Endothelial cell of umbilical vein (primary cell): ENCODE measurements at regions of chr12 and their contacts with region 1.

Region 1: GRCh38 chr12:132687208-132688164 is at the starts of genes POLE and PXMP2:
- DNase-seq: peak; percentile 92
- H3K4me3 ChIP-seq: peak within 1 kb of the TSS; percentile 37 to 77 (median 62)
- H3K27ac ChIP-seq: peak within 1 kb of the TSS; percentile 62
- H3K4me1 ChIP-seq: no peaks in the 10 kb centered on the region
- H3K27me3 ChIP-seq: no peaks in the 10 kb centered on the region
- CTCF ChIP-seq: no peak
- POLR2A ChIP-seq: peak; percentile 70
- total RNA-seq, gene POLE: 73.7 and 82.7 TPM in 2 replicates
- total RNA-seq, gene PXMP2: 21.1 and 24.0 TPM in 2 replicates

Region 2: DNA sequence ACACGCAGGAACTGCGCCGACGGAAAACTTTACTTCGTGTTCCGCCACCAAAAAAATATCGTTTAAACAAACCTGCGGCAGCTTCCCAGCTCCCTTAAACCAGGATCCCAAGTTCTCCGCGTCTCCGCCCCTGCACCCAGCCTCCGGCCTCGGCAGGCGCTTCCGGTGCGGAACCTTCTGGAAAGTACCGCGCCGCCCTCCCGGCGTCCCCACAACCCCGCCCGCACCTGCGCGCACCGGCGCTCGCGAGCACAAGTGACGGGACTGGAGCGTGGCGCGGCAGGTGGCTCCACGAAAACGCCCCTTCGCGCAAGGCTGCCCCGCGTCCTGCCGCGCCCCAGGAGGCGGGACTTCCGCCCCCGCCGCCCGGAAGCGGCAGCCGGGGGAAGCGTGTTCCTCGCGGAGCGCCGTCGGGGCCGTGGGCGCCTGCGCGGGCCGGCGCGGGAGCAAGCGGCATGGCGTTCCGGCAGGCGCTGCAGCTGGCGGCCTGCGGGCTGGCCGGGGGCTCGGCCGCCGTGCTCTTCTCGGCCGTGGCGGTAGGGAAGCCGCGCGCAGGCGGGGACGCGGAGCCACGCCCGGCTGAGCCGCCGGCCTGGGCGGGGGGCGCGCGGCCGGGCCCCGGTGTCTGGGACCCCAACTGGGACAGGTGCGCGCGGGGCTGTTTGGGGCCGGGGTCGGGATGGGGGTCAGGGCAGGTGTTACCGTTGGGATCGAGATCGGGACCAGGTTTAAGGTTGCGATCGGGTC is 23.1 kb after region 1 on chr12 and contains the start of gene PGAM5:
- CTCF ChIA-PET with region 1: no interaction called
- POLR2A ChIA-PET with region 1: no interaction called
- dilution Hi-C with region 1: no loop called
- intact Hi-C with region 1: loop called (anchors 1 kb)
- DNase-seq: peak; percentile 82
- H3K4me3 ChIP-seq: peak within 1 kb of the TSS; percentile 75 to 97 (median 97)
- H3K27ac ChIP-seq: peak within 1 kb of the TSS; percentile 19
- H3K4me1 ChIP-seq: peaks cover 5% of the 10 kb centered on the region
- H3K27me3 ChIP-seq: no peaks in the 10 kb centered on the region
- CTCF ChIP-seq: no peak
- POLR2A ChIP-seq: peak; percentile 88
- total RNA-seq, gene PGAM5: 45.7 and 52.8 TPM in 2 replicates